Breast epithelium (tissue), 4 donors: ENCODE measurements at regions of chr2 and their contacts with region 1.

Region 1: GRCh38 chr2:61353909-61354308 is 117.0 kb downstream of the USP34 start:
- DNase-seq: no peak
- H3K4me3 ChIP-seq: no peak overlapping the region
- H3K27ac ChIP-seq: no peak overlapping the region
- H3K4me1 ChIP-seq: no peaks in the 10 kb centered on the region
- H3K27me3 ChIP-seq: no peaks in the 10 kb centered on the region
- CTCF ChIP-seq: no peak
- POLR2A ChIP-seq: no peak

Region 2: GRCh38 chr2:61318553-61318952 is 35.4 kb before region 1 on chr2:
- intact Hi-C with region 1: no loop called
- DNase-seq: no peak
- H3K4me3 ChIP-seq: no peak overlapping the region
- H3K27ac ChIP-seq: no peak overlapping the region
- H3K4me1 ChIP-seq: no peaks in the 10 kb centered on the region
- H3K27me3 ChIP-seq: no peaks in the 10 kb centered on the region
- CTCF ChIP-seq: no peak
- POLR2A ChIP-seq: no peak

Region 3: DNA sequence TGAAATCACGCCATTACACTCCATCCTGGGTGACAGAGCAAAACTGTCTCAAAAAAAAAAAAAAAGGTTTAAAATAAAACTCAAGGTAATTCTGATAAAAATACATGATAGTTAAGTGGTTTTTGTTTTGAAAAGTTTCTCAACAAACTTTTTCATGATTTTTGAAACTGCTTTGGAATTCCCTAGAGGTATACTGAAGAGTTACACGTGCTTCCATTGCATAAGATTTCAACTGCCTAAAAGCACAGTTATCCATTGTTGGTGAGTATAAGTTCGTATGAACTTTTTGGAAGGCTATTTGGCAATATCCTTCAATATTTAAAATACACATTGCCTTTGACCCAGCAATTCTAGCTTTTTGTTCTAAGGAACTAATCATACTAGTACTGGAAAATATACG is 42.1 kb after region 1 on chr2:
- intact Hi-C with region 1: loop called (anchors 2 kb)
- DNase-seq: no peak
- H3K4me3 ChIP-seq: no peak overlapping the region
- H3K27ac ChIP-seq: no peak overlapping the region
- H3K4me1 ChIP-seq: no peaks in the 10 kb centered on the region
- H3K27me3 ChIP-seq: no peaks in the 10 kb centered on the region
- CTCF ChIP-seq: no peak
- POLR2A ChIP-seq: no peak